CD8-positive, alpha-beta T cell (primary cell): ENCODE measurements at regions of chr17 and their contacts with region 1.

Region 1: GRCh38 chr17:35531160-35531559 is 6.3 kb downstream of the SLFN12L start:
- DNase-seq: peak in 2 of 9 experiments; percentile 50 to 71
- ATAC-seq: peak; percentile 42
- H3K4me3 ChIP-seq: peak overlapping the region in 1 of 2 experiments; percentile 1
- H3K4me3 Mint-ChIP-seq: peak overlapping the region; percentile 27
- H3K27ac ChIP-seq: peak overlapping the region; percentile 42 to 66
- H3K27ac Mint-ChIP-seq: peak overlapping the region; percentile 96
- H3K4me1 ChIP-seq: peaks cover 57% of the 10 kb centered on the region
- H3K4me1 Mint-ChIP-seq: peaks cover 72% of the 10 kb centered on the region
- H3K27me3 ChIP-seq: no peaks in the 10 kb centered on the region
- H3K27me3 Mint-ChIP-seq: no peaks in the 10 kb centered on the region
- CTCF ChIP-seq: no peak

Region 2: GRCh38 chr17:35161281-35161761 is 369.8 kb before region 1 on chr17:
- CTCF ChIA-PET with region 1: interaction called, 11 read pairs
- POLR2A ChIA-PET with region 1: interaction called, 3 read pairs
- intact Hi-C with region 1: no loop called
- DNase-seq: peak in 8 of 9 experiments; percentile 6 to 81 (median 38)
- ATAC-seq: peak; percentile 52
- H3K4me3 ChIP-seq: peak overlapping the region; percentile 5 to 25
- H3K4me3 Mint-ChIP-seq: peak overlapping the region; percentile 70
- H3K27ac ChIP-seq: peak overlapping the region; percentile 40 to 77
- H3K27ac Mint-ChIP-seq: peak overlapping the region; percentile 95
- H3K4me1 ChIP-seq: peaks cover 53% of the 10 kb centered on the region
- H3K4me1 Mint-ChIP-seq: peaks cover 58% of the 10 kb centered on the region
- H3K27me3 ChIP-seq: no peaks in the 10 kb centered on the region
- H3K27me3 Mint-ChIP-seq: no peaks in the 10 kb centered on the region
- CTCF ChIP-seq: no peak

Region 3: GRCh38 chr17:35170968-35171771 is 360.0 kb before region 1 on chr17:
- CTCF ChIA-PET with region 1: interaction called, 49 read pairs
- POLR2A ChIA-PET with region 1: interaction called, 3 read pairs
- intact Hi-C with region 1: loop called (anchors 1 kb)
- DNase-seq: peak in 5 of 9 experiments; percentile 31 to 70 (median 62)
- ATAC-seq: peak; percentile 79
- H3K4me3 ChIP-seq: peak overlapping the region; percentile 10 to 31
- H3K4me3 Mint-ChIP-seq: peak overlapping the region; percentile 57
- H3K27ac ChIP-seq: peak overlapping the region in 1 of 2 experiments; percentile 51
- H3K27ac Mint-ChIP-seq: peak overlapping the region; percentile 90
- H3K4me1 ChIP-seq: peaks cover 37% of the 10 kb centered on the region
- H3K4me1 Mint-ChIP-seq: peaks cover 46% of the 10 kb centered on the region
- H3K27me3 ChIP-seq: no peaks in the 10 kb centered on the region
- H3K27me3 Mint-ChIP-seq: no peaks in the 10 kb centered on the region
- CTCF ChIP-seq: peak; percentile 69

Region 4: GRCh38 chr17:35432176-35433074 is 98.7 kb before region 1 on chr17 and contains the start of gene SLFN12:
- CTCF ChIA-PET with region 1: interaction called, 5 read pairs
- POLR2A ChIA-PET with region 1: interaction called, 4 read pairs
- intact Hi-C with region 1: loop called (anchors 2 to 5 kb)
- DNase-seq: peak in 8 of 9 experiments; percentile 8 to 87 (median 50)
- ATAC-seq: peak; percentile 86
- H3K4me3 ChIP-seq: peak within 1 kb of the TSS; percentile 59 to 91
- H3K4me3 Mint-ChIP-seq: peak within 1 kb of the TSS; percentile 91
- H3K27ac ChIP-seq: peak within 1 kb of the TSS; percentile 42
- H3K27ac Mint-ChIP-seq: peak within 1 kb of the TSS; percentile 90
- H3K4me1 ChIP-seq: peaks cover 37% of the 10 kb centered on the region
- H3K4me1 Mint-ChIP-seq: peaks cover 46% of the 10 kb centered on the region
- H3K27me3 ChIP-seq: no peaks in the 10 kb centered on the region
- H3K27me3 Mint-ChIP-seq: no peaks in the 10 kb centered on the region
- CTCF ChIP-seq: no peak
- total RNA-seq, gene SLFN12: 2.4 TPM

Region 5: GRCh38 chr17:35448214-35448898 is 82.8 kb before region 1 on chr17 and contains the start of gene SLFN13:
- CTCF ChIA-PET with region 1: interaction called, 6 read pairs
- POLR2A ChIA-PET with region 1: interaction called, 11 read pairs
- intact Hi-C with region 1: loop called (anchors 5 kb)
- DNase-seq: peak; percentile 58 to 93 (median 84)
- ATAC-seq: peak; percentile 90
- H3K4me3 ChIP-seq: peak within 1 kb of the TSS; percentile 57 to 70
- H3K4me3 Mint-ChIP-seq: peak within 1 kb of the TSS; percentile 87
- H3K27ac ChIP-seq: peak within 1 kb of the TSS; percentile 51 to 58
- H3K27ac Mint-ChIP-seq: peak within 1 kb of the TSS; percentile 93
- H3K4me1 ChIP-seq: peaks cover 16% of the 10 kb centered on the region
- H3K4me1 Mint-ChIP-seq: peaks cover 19% of the 10 kb centered on the region
- H3K27me3 ChIP-seq: no peaks in the 10 kb centered on the region
- H3K27me3 Mint-ChIP-seq: no peaks in the 10 kb centered on the region
- CTCF ChIP-seq: no peak
- total RNA-seq, gene SLFN13: 16.1 to 17.3 TPM

Region 6: GRCh38 chr17:35519439-35519838 is 11.7 kb before region 1 on chr17:
- CTCF ChIA-PET with region 1: interaction called, 10 read pairs
- POLR2A ChIA-PET with region 1: interaction called, 10 read pairs
- intact Hi-C with region 1: loop called in 1 of 2 experiments (anchors 2 kb)
- DNase-seq: peak in 2 of 9 experiments; percentile 51 to 71
- ATAC-seq: peak; percentile 32
- H3K4me3 ChIP-seq: no peak overlapping the region
- H3K4me3 Mint-ChIP-seq: peak overlapping the region; percentile 64
- H3K27ac ChIP-seq: peak overlapping the region in 1 of 2 experiments; percentile 77
- H3K27ac Mint-ChIP-seq: peak overlapping the region; percentile 86
- H3K4me1 ChIP-seq: peaks cover 67% of the 10 kb centered on the region
- H3K4me1 Mint-ChIP-seq: peaks cover 93% of the 10 kb centered on the region
- H3K27me3 ChIP-seq: no peaks in the 10 kb centered on the region
- H3K27me3 Mint-ChIP-seq: no peaks in the 10 kb centered on the region
- CTCF ChIP-seq: no peak

Region 7: DNA sequence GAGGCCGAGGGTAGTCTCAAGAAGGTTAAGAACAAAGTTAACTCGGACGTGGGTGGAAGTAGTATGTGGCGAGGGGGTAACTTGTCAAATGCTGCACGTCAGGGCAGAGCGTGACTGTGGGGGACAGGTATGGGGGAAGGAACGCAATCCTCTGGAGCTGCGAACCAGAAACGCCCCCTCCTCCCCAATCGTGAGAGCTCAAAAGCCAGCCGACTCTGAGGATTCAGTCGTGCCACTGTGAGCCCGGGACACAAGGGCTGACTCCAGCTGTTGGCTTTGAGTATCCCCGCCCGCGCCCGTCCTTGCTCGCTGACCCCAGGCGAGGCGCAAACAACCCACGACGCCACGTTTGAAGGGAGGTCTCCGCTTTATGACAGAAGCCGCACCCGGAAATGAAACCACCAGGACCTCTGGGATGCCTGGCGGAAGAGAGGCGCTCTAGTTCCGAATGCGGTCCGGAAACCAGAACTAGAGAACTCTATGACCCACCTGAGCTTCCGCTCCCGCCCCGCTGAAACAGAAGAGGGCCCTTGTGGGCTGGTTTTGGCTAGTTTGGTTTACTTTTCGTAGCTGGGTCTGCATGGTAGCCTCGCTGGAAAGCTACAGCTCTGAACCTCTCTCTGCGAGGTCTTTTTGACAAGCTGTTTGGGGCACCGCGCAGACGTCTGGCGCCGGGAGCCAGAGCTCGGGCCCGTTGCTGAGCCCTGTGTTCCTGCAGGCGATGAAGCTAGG is 47.2 kb after region 1 on chr17 and contains the start of gene PEX12:
- CTCF ChIA-PET with region 1: no interaction called
- POLR2A ChIA-PET with region 1: interaction called, 10 read pairs
- intact Hi-C with region 1: no loop called
- DNase-seq: peak; percentile 70 to 96 (median 89)
- ATAC-seq: peak; percentile 93
- H3K4me3 ChIP-seq: peak within 1 kb of the TSS; percentile 69 to 88
- H3K4me3 Mint-ChIP-seq: peak within 1 kb of the TSS; percentile 93
- H3K27ac ChIP-seq: peak within 1 kb of the TSS; percentile 88 to 94
- H3K27ac Mint-ChIP-seq: peak within 1 kb of the TSS; percentile 98
- H3K4me1 ChIP-seq: peaks cover 18% of the 10 kb centered on the region
- H3K4me1 Mint-ChIP-seq: peaks cover 29% of the 10 kb centered on the region
- H3K27me3 ChIP-seq: no peaks in the 10 kb centered on the region
- H3K27me3 Mint-ChIP-seq: no peaks in the 10 kb centered on the region
- CTCF ChIP-seq: no peak
- total RNA-seq, gene PEX12: 2.7 to 3.2 TPM